ENCODE measurements at regions of chr3 and their contacts with region 1.

Region 1: DNA sequence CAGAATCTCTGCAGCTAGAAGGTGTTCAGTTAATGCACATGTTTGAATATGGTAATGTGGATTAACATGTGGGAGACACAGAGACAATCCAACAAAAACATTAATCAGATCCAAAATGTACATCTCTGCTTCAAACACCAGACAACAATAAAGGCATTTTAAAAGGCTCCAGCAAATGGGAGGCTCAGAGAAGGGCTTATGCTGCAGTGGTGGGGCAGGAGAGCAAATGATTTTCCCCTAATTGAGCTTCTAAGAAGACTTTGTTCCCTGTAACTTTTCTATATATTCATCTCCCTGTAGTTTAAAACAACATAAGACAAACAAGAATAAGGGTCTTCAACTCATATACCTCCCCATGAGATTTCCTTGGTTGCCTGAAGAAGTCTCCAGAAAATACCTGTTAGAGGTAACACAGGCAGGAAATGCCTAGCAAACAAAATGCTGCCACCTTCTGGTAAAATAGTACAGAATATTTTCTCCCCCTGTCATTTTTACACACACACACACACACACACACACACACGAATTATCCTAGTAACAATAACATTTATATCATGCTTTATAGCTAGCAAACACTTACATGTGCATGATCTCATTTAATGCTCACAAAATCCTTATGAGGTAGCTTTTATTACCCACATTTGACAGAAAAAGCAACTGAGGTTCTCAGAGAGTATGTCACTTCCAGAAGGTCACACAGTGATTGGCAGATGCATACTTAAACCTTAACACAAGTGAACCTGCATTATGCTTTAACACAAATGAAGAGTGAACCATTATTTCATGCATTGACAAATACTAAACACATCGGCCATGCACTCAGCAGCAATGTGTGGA is 123.4 kb upstream of the MB21D2 start:
- DNase-seq: no peak
- H3K4me3 ChIP-seq: no peak overlapping the region
- CTCF ChIP-seq: peak; percentile 31

Region 2: GRCh38 chr3:192778508-192778907 is 262.5 kb before region 1 on chr3:
- CTCF ChIA-PET with region 1: no interaction called
- POLR2A ChIA-PET with region 1: no interaction called
- DNase-seq: no peak
- H3K4me3 ChIP-seq: no peak overlapping the region
- CTCF ChIP-seq: no peak

Region 3: DNA sequence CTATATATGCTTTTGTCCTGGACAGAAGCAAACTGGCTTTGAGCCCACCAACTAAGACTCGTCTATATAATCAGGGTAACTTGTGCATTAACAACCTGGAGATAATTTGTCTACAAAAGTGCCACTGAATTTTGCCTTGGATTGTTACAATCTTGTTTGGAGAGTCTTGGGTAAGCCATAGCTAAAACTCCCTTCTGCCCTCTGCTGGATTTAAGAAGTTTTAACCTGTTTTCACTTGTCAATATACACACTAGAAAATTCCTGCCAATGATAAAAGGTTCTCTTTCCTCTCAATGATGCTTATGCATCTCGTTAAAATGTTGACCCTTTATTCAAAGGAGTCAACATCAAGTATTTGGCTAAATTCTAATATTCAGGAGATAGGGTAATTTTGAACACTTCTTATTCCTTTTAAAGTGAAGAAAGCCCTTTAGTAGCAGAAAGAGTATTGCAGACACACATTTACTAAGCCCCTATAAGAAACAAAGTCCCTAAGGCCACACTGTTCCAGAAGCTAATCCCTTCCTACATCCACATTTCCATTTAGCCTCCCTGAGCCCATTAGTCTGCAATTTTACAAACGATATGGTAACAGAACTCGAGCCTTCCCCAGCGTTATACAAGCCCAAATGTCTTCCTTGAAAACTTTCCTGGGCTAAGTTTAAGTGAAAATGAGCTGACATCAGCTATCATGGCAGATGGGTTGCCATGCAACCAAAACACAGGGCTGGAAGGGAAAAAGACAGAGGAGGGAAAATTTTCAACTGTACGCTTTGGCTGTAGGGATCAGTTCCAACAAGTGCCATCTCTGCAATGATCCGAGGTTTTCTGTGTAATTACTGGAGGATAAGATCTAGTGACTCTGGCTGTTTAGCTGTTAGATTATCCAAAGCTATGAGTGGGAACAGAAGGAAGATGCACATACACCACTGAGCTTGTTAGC is 237.8 kb before region 1 on chr3:
- CTCF ChIA-PET with region 1: interaction called, 678 read pairs
- POLR2A ChIA-PET with region 1: no interaction called
- DNase-seq: no peak
- H3K4me3 ChIP-seq: no peak overlapping the region
- CTCF ChIP-seq: peak; percentile 34

Region 4: DNA sequence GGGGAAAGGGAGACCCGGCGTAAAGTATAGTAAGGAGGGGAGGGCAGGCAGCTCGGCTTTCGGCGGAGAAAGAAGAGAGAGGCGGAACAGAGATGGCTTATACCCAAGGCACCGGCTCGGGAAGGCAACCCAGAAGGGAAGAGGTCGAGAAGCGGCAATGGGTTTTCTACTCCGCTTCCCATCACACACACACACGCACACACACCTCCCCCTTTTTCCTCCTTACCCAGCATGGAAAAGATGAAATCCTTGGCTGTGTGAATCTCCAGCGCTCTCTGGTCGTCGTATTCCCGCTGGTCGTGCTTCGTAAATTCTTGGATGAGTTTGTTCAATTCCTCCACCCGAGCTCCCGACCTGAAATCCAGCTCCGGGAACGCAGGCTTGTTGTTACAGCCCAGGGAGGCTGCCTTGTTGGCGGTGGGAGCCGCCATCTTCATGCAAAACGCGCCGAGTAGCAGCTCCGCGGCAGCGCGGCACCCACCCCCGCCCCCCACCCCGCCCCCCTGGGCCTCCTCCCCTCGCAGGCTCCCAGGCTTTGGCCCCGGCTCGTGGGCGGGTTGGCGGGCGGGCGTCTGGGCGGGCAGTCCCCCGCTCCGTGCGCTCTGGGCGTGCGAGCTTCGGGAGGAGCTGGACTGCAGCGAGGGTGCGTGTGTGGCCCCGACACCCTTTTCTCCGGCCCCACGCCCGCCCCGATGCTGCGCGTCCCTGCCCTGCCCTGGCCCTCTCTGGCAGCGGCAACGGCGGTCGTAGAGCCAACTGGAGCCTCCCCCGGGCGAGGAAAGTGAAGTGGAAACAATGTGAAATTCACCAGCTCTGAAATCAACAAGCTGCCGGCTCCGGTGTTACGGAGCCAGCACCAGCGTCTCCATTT is 123.4 kb before region 1 on chr3 and contains the start of gene MB21D2:
- CTCF ChIA-PET with region 1: interaction called, 39 read pairs
- POLR2A ChIA-PET with region 1: no interaction called
- DNase-seq: no peak
- H3K4me3 ChIP-seq: peak within 1 kb of the TSS; percentile 97
- CTCF ChIP-seq: no peak

Region 5: DNA sequence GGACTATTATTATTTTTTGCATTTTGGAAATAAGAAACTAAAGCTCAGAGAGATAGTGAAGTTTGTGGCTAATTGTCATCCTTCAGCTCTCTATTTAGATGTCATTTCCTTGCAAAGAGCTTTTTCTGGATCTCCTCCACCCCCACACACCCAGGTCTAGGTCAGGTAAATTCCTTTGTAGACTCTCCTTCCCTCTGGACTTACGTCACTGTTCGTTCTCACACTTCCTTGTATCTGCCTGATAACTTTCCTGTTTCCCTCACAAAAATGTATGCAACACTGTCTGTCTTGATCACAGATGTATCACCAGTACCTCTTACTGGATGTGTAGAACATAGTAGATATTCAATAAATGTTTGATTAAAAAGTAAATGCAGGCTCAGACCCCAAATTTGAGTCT is 117.3 kb before region 1 on chr3:
- CTCF ChIA-PET with region 1: interaction called, 17 read pairs
- POLR2A ChIA-PET with region 1: no interaction called
- DNase-seq: no peak
- H3K4me3 ChIP-seq: no peak overlapping the region
- CTCF ChIP-seq: no peak

Region 6: GRCh38 chr3:193030276-193030675 is 10.8 kb before region 1 on chr3:
- CTCF ChIA-PET with region 1: interaction called, 19 read pairs
- POLR2A ChIA-PET with region 1: no interaction called
- DNase-seq: no peak
- H3K4me3 ChIP-seq: no peak overlapping the region
- CTCF ChIP-seq: no peak

Region 7: DNA sequence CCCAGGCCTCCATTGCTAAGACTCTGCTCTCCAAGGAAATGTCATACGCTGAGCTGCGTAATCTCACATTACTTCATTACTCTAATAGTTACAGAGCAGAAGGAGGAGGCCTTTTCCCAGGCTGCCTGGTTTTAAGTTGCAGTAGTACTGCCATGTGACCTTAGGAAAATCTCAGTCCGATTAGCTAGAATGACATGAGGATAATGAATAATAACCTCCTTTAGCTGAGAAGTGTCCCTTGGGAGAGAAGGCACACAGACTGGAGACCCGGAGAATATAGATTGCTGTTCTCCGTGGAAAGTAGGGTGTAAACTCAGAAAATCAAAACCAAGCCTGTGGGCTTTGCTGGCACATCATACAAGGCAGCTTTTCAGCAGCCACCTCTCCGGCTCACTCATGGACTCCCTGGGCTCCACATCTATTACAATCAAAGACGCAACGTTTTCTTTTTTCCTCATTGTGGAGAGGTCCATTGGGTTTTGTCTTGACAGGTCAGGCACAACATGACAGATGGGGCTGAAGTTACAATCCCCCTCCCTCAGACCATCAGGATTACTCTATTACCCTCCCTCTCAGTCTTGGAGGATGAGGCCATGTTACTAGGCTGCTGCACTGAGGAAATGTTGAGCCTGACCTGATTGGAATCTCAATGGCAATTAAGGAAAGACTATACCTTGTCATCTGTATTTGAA is 11.4 kb after region 1 on chr3:
- CTCF ChIA-PET with region 1: interaction called, 39 read pairs
- POLR2A ChIA-PET with region 1: no interaction called
- DNase-seq: no peak
- H3K4me3 ChIP-seq: no peak overlapping the region
- CTCF ChIP-seq: no peak